A549 (cell line): ENCODE measurements at regions of chr15 and their contacts with region 1.

Region 1: GRCh38 chr15:27059610-27060202 is 88.7 kb downstream of the GABRG3 start:
- DNase-seq: peak; percentile 75 to 84
- ATAC-seq: peak; percentile 56 to 91; a peak in 4 of 6 replicates
- H3K4me3 ChIP-seq: no peak overlapping the region
- H3K27ac ChIP-seq: no peak overlapping the region
- H3K4me1 ChIP-seq: peaks cover 8% of the 10 kb centered on the region; the same call in 2 of the 3 replicates
- CTCF ChIP-seq: peak; percentile 55
- EP300 ChIP-seq: no peak
- POLR2A ChIP-seq: no peak
- RAD21 ChIP-seq: peak; percentile 47 to 48

Region 2: GRCh38 chr15:26967719-26968269 is 91.9 kb before region 1 on chr15:
- CTCF ChIA-PET with region 1: no interaction called
- POLR2A ChIA-PET with region 1: no interaction called
- DNase-seq: no peak
- ATAC-seq: no peak
- H3K4me3 ChIP-seq: peak overlapping the region; percentile 19; the same call in 1 of the 3 replicates
- H3K27ac ChIP-seq: no peak overlapping the region
- H3K4me1 ChIP-seq: peaks cover 5% of the 10 kb centered on the region; the same call in 1 of the 3 replicates
- CTCF ChIP-seq: no peak
- EP300 ChIP-seq: no peak
- POLR2A ChIP-seq: no peak
- RAD21 ChIP-seq: no peak

Region 3: GRCh38 chr15:27046880-27047279 is 12.8 kb before region 1 on chr15:
- CTCF ChIA-PET with region 1: interaction called, 26 read pairs
- POLR2A ChIA-PET with region 1: no interaction called
- DNase-seq: no peak
- ATAC-seq: no peak
- H3K4me3 ChIP-seq: no peak overlapping the region
- H3K27ac ChIP-seq: no peak overlapping the region
- H3K4me1 ChIP-seq: no peaks in the 10 kb centered on the region
- CTCF ChIP-seq: no peak
- EP300 ChIP-seq: no peak
- POLR2A ChIP-seq: no peak
- RAD21 ChIP-seq: no peak

Region 4: DNA sequence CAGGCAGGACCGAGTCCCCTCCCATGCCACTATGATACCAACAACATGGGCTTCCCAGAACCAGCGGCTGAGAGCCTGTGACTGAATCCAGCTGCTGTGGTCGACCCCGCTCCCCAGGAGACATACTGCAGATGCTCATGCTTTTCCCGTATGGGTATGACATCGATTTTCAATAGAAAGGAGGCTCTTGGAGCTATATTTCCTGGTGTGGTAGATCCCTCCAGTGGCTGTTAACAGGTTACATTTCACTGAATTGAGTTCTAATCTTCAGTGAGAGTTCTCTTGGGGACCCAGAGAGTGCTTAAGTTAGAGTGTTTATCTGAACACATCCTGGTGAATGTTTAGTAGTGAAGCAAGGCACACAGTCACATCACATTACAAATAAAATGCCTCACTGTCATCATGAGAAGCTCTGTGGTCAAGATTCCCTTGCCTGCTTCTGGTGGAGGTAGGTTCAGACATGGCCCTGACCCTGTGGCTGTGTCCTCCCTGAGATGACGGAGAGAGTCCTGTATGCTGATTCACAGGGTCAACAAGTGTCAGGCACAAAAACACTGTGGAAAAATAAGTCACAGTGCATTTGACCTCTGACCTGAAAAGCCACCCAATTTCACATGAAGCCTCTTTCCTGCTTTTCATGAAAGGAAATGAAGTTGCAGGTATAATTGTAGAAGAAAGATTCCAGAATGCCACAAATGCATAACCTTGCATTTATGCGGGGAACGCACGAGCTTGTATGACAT is 22.1 kb after region 1 on chr15:
- CTCF ChIA-PET with region 1: interaction called, 11 read pairs
- POLR2A ChIA-PET with region 1: no interaction called
- DNase-seq: no peak
- ATAC-seq: no peak
- H3K4me3 ChIP-seq: no peak overlapping the region
- H3K27ac ChIP-seq: no peak overlapping the region
- H3K4me1 ChIP-seq: no peaks in the 10 kb centered on the region
- CTCF ChIP-seq: no peak
- EP300 ChIP-seq: no peak
- POLR2A ChIP-seq: no peak
- RAD21 ChIP-seq: no peak